K562 (cell line): ENCODE measurements at regions of chr12 and their contacts with region 1.

Region 1: GRCh38 chr12:92273076-92273475 is 127.4 kb upstream of the BTG1 start:
- DNase-seq: no peak
- ATAC-seq: no peak
- H3K4me3 ChIP-seq: no peak overlapping the region
- H3K27ac ChIP-seq: no peak overlapping the region
- H3K4me1 ChIP-seq: 0 out of 5 replicates have a peak, but pooled peaks cover 0 to 3% of the 10 kb centered on the region in 2 experiments
- H3K27me3 ChIP-seq: no peaks in the 10 kb centered on the region
- CTCF ChIP-seq: no peak
- EP300 ChIP-seq: no peak
- POLR2A ChIP-seq: no peak
- RAD21 ChIP-seq: no peak

Region 2: GRCh38 chr12:92234533-92234932 is 38.5 kb before region 1 on chr12:
- CTCF ChIA-PET with region 1: no interaction called
- POLR2A ChIA-PET with region 1: interaction called, 5 read pairs
- in situ Hi-C with region 1: no loop called
- intact Hi-C with region 1: loop called (anchors 1 kb)
- DNase-seq: no peak
- ATAC-seq: peak; percentile 61
- H3K4me3 ChIP-seq: no peak overlapping the region
- H3K27ac ChIP-seq: no peak overlapping the region
- H3K4me1 ChIP-seq: peaks cover 0 to 12% of the 10 kb centered on the region in 2 experiments; a peak in 4 of 5 replicates
- H3K27me3 ChIP-seq: no peaks in the 10 kb centered on the region
- CTCF ChIP-seq: no peak
- EP300 ChIP-seq: no peak
- POLR2A ChIP-seq: no peak
- RAD21 ChIP-seq: no peak